ENCODE measurements at regions of chr13 and their contacts with region 1.

Region 1: GRCh38 chr13:30114571-30115256 is 192.6 kb downstream of the KATNAL1 start:
- DNase-seq: peak; percentile 94
- H3K4me3 ChIP-seq: peak overlapping the region; percentile 30 to 65 (median 64)
- H3K27ac ChIP-seq: peak overlapping the region; percentile 47 to 78 (median 74)
- H3K4me1 ChIP-seq: peaks cover 0 to 53% (median 50%) of the 10 kb centered on the region in 4 donors
- H3K27me3 ChIP-seq: no peaks in the 10 kb centered on the region
- CTCF ChIP-seq: peak; percentile 79 to 90 (median 88)
- EP300 ChIP-seq: no peak
- POLR2A ChIP-seq: no peak

Region 2: DNA sequence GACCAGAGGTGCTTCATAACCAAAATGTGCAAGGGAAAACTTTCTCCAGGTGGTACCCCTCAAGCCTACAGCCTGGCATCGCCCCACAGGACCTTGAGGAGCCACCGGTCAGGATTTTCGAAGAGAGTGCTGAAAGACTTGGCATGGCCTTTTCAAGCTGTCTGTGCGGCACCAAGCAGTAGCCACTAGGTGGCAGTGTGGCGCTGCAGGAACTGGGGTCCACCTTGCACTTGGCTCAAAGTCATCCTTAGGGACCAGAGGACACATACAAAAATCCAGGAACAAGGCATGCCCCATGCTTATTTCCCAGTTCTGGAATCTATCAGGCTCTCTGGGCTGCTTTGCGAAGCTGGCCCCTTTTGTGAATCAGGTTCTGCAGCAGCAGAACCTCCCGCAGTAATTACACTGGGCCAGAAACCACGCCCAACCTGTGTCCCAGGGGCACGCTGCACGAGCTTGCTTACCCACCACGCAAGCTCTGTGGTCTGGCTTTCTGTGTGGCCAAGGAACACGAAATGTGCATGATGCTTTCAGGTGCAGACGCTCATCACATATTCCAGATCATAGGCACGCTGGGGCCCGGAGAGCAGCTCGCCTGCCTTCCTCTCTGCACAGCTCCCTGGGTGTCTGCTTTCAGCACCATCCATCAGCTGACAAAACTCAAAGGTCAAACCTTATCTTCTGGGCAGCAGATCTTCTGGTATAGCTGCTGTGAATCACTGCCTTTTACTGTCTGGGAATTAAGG is 606.4 kb before region 1 on chr13:
- intact Hi-C with region 1: loop called (anchors 1 kb)
- DNase-seq: peak; percentile 93
- H3K4me3 ChIP-seq: no peak overlapping the region
- H3K27ac ChIP-seq: peak overlapping the region in 2 of 4 donors; percentile 12 to 58
- H3K4me1 ChIP-seq: peaks cover 0 to 34% (median 28%) of the 10 kb centered on the region in 4 donors
- H3K27me3 ChIP-seq: no peaks in the 10 kb centered on the region
- CTCF ChIP-seq: peak; percentile 86 to 98 (median 94)
- EP300 ChIP-seq: no peak
- POLR2A ChIP-seq: no peak

Region 3: GRCh38 chr13:29743201-29743786 is 371.4 kb before region 1 on chr13:
- intact Hi-C with region 1: loop called (anchors 1 kb)
- DNase-seq: peak; percentile 96
- H3K4me3 ChIP-seq: peak overlapping the region in 1 of 4 donors; percentile 15
- H3K27ac ChIP-seq: peak overlapping the region; percentile 52 to 86 (median 82)
- H3K4me1 ChIP-seq: peaks cover 0 to 30% (median 24%) of the 10 kb centered on the region in 4 donors
- H3K27me3 ChIP-seq: no peaks in the 10 kb centered on the region
- CTCF ChIP-seq: no peak
- EP300 ChIP-seq: peak; percentile 48 to 80 (median 72)
- POLR2A ChIP-seq: no peak

Region 4: GRCh38 chr13:29850224-29850898 is 264.4 kb before region 1 on chr13 and contains the start of gene UBL3:
- intact Hi-C with region 1: loop called (anchors 2 kb)
- DNase-seq: peak; percentile 99
- H3K4me3 ChIP-seq: peak within 1 kb of the TSS; percentile 84 to 92 (median 88)
- H3K27ac ChIP-seq: peak within 1 kb of the TSS; percentile 97 to 99 (median 98)
- H3K4me1 ChIP-seq: peaks cover 0 to 22% (median 17%) of the 10 kb centered on the region in 4 donors
- H3K27me3 ChIP-seq: no peaks in the 10 kb centered on the region
- CTCF ChIP-seq: no peak
- EP300 ChIP-seq: peak in 1 of 4 donors; percentile 36
- POLR2A ChIP-seq: peak; percentile 71 to 80
- total RNA-seq, gene UBL3: 35.6 to 44.6 (median 40.6) TPM

Region 5: DNA sequence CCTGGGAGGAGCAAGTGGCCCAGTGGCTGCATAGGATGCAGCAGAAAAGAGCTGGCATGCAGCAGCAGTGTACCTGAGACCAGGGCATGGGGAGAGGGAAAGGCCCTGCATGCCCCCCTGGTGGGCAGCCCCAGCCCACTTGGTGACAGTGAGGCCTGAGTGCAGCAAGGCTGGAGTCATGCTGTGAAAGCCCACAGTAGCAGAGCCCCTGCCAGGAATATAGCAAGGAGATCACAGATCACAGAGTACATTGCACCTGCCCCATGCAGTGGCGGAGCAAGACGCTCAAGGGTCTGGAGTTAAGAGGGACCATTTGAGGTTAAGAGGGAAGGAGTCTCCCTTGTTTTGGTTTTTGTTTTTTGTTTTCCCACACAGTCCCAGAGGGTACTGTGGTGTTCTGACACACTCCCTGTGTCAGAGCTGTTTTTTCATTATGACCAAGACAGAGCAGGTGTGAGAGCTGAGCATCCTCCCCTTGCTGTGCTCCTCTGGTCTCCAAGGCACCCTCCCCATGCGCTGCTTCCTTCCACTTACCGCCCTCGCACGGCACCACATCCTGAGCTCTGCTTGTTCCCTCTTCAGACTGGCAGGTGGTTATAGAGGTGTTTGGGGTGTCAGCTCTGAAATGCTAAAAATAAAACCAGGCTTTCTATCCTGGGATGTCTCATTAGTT is 179.3 kb before region 1 on chr13:
- intact Hi-C with region 1: loop called (anchors 5 kb)
- DNase-seq: no peak
- H3K4me3 ChIP-seq: no peak overlapping the region
- H3K27ac ChIP-seq: no peak overlapping the region
- H3K4me1 ChIP-seq: no peaks in the 10 kb centered on the region
- H3K27me3 ChIP-seq: no peaks in the 10 kb centered on the region
- CTCF ChIP-seq: no peak
- EP300 ChIP-seq: no peak
- POLR2A ChIP-seq: no peak

Region 6: GRCh38 chr13:30306762-30307193 is 192.1 kb after region 1 on chr13:
- intact Hi-C with region 1: no loop called
- DNase-seq: peak; percentile 97
- H3K4me3 ChIP-seq: peak overlapping the region; percentile 60 to 87 (median 82)
- H3K27ac ChIP-seq: peak overlapping the region; percentile 89 to 95 (median 94)
- H3K4me1 ChIP-seq: peaks cover 0 to 57% (median 38%) of the 10 kb centered on the region in 4 donors
- H3K27me3 ChIP-seq: no peaks in the 10 kb centered on the region
- CTCF ChIP-seq: no peak
- EP300 ChIP-seq: no peak
- POLR2A ChIP-seq: no peak